ENCODE measurements at regions of chr4 and their contacts with region 1.

Region 1: DNA sequence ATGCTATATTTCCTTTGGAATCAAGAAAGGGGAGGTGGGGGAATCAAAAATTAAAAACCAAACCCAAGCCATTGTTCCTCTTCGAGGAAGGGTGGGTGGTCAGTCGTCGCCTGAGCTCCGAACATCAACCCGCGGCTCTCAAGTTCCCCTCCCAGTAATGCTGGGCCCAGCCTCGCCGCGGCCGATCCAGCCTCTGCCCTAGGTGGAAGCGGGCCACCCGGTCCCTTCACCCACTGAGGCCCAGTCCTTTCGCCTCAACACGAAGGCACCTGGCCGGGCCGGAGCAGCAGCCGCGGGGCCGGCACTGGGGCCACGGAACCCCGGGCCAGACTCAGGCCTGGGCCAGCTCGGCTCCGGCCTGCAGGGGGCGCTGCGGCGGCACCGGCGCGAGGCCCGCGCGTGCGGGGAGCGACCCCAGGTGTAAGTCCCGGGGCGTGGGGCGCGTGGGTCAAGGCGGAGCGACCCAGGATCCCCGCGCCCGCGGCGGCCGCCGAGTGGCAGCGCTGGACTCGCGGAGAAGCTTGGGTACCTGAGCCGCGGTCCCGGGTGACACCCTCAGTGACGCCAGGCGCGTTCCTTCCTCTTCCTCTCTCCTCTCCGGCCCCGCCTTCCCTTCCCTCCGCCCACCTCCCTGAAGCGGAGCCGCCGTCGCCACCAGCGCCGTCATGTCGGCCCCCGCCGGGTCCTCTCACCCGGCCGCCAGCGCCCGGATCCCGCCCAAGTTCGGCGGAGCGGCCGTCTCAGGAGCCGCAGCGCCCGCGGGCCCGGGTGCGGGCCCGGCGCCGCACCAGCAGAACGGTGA is at the start of gene SEC24B:
- DNase-seq: peak; percentile 78 to 96 (median 88)
- ATAC-seq: peak; percentile 87
- H3K4me3 ChIP-seq: peak within 1 kb of the TSS; percentile 96
- H3K4me3 Mint-ChIP-seq: peak within 1 kb of the TSS; percentile 96
- H3K27ac ChIP-seq: peak within 1 kb of the TSS; percentile 78 to 89
- H3K27ac Mint-ChIP-seq: peak within 1 kb of the TSS; percentile 95
- H3K4me1 ChIP-seq: peaks cover 39% of the 10 kb centered on the region
- H3K4me1 Mint-ChIP-seq: peaks cover 58% of the 10 kb centered on the region
- H3K27me3 ChIP-seq: no peaks in the 10 kb centered on the region
- H3K27me3 Mint-ChIP-seq: no peaks in the 10 kb centered on the region
- CTCF ChIP-seq: peak; percentile 87
- total RNA-seq, gene SEC24B: 41.5 to 45.9 TPM

Region 2: GRCh38 chr4:108620101-108620932 is 813.1 kb before region 1 on chr4 and contains the start of gene RPL34:
- CTCF ChIA-PET with region 1: no interaction called
- POLR2A ChIA-PET with region 1: no interaction called
- intact Hi-C with region 1: loop called in 1 of 2 experiments (anchors 5 kb)
- DNase-seq: peak; percentile 93 to 99 (median 97)
- ATAC-seq: peak; percentile 98
- H3K4me3 ChIP-seq: peak within 1 kb of the TSS; percentile 78
- H3K4me3 Mint-ChIP-seq: peak within 1 kb of the TSS; percentile 97
- H3K27ac ChIP-seq: peak within 1 kb of the TSS; percentile 85
- H3K27ac Mint-ChIP-seq: peak within 1 kb of the TSS; percentile 99
- H3K4me1 ChIP-seq: peaks cover 36% of the 10 kb centered on the region
- H3K4me1 Mint-ChIP-seq: peaks cover 65% of the 10 kb centered on the region
- H3K27me3 ChIP-seq: no peaks in the 10 kb centered on the region
- H3K27me3 Mint-ChIP-seq: no peaks in the 10 kb centered on the region
- CTCF ChIP-seq: no peak
- total RNA-seq, gene RPL34: 3,283 to 3,551 TPM

Region 3: GRCh38 chr4:109658871-109659410 is 225.5 kb after region 1 on chr4:
- CTCF ChIA-PET with region 1: interaction called, 3 read pairs
- POLR2A ChIA-PET with region 1: interaction called, 9 read pairs
- intact Hi-C with region 1: loop called (anchors 2 kb)
- DNase-seq: peak in 5 of 14 experiments; percentile 22 to 59 (median 45)
- ATAC-seq: peak; percentile 78
- H3K4me3 ChIP-seq: no peak overlapping the region
- H3K4me3 Mint-ChIP-seq: no peak overlapping the region
- H3K27ac ChIP-seq: no peak overlapping the region
- H3K27ac Mint-ChIP-seq: no peak overlapping the region
- H3K4me1 ChIP-seq: peaks cover 37% of the 10 kb centered on the region
- H3K4me1 Mint-ChIP-seq: peaks cover 64% of the 10 kb centered on the region
- H3K27me3 ChIP-seq: no peaks in the 10 kb centered on the region
- H3K27me3 Mint-ChIP-seq: no peaks in the 10 kb centered on the region
- CTCF ChIP-seq: peak; percentile 61

Region 4: DNA sequence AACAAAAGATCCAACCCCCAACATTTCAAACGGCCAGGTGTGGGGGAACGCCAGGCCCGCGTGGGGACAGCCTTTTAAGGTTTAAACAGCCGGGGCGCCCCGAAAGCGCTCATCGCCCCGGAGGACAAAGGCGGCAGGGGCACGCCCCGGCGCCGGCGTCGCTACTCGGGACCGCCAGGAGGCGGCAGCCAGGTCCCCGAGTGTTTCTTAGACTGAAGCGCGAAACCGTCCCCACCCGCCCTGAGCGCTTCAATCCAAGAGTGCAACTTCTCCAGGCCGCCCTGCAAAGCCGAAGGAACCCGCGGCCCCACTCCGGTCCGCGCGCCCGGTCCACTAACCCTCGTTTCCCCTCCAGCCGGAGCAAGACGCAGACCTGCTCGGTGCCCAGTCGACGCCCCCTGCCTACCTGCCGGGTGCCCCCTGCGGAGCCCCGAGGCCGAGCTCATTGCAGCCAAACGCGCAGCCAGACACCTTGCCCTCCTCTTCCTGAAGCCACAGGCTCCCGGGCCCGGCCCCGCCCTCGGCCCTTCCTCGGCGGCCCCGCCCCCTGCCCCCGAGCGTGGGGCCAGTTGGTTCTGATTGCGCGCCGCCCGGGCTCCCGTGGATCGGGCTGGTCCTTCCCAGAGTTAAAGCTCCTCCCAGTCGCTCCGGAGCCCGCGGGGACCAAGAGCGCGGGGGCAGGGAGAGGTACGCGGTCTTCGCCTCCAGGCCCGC is 269.7 kb after region 1 on chr4 and contains the start of gene CASP6:
- CTCF ChIA-PET with region 1: interaction called, 6 read pairs
- POLR2A ChIA-PET with region 1: interaction called, 4 read pairs
- intact Hi-C with region 1: loop called (anchors 2 to 5 kb)
- DNase-seq: peak; percentile 62 to 90 (median 73)
- ATAC-seq: peak; percentile 90
- H3K4me3 ChIP-seq: peak within 1 kb of the TSS; percentile 80
- H3K4me3 Mint-ChIP-seq: peak within 1 kb of the TSS; percentile 97
- H3K27ac ChIP-seq: peak within 1 kb of the TSS; percentile 39 to 60
- H3K27ac Mint-ChIP-seq: peak within 1 kb of the TSS; percentile 96
- H3K4me1 ChIP-seq: peaks cover 33% of the 10 kb centered on the region
- H3K4me1 Mint-ChIP-seq: peaks cover 50% of the 10 kb centered on the region
- H3K27me3 ChIP-seq: no peaks in the 10 kb centered on the region
- H3K27me3 Mint-ChIP-seq: no peaks in the 10 kb centered on the region
- CTCF ChIP-seq: peak; percentile 78
- total RNA-seq, gene CASP6: 5.4 to 5.5 TPM

Region 5: DNA sequence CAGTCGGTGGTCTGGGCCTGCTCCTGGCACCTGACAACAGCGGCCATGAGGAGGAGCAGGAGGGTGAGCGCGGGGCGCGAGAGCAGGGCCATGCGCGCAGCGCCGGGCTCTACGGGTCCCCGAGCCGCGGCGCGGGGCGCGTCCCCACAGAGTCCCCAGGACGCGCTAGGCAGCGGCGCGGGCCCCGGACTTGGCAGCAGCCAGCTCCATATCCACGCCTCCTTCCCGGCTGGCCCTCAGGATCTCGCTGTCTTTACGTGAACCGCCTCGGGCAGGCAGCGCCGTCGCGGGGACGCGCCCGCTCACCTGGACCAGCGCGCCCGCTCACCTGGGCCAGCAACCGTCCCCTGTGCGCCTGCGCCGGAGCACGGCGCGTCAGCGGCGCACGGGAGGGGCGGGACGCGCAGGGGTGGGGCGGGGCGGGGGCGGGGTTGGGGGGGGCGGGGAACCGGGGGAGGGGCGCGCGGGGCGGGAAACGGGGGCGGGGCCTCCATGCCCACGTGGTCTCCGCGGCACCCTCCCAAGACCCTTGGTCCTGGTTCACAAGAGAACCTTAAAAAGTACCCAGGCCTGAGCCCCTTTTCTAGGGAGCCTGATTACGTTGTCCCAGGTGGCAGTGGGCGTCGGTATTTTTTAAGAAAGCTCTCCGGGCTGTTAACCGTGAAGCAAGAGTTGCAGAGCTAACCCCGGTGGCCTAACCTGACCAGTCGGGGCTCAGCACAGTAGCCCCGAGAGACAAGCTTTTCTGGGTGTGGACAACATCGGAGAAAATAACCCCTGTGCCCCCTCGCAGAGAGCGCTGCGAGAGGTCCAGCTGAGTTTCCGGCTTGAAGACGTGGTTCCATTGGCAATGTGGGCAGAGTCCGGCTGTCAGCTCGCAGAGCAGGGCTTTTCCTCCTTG is 296.6 kb after region 1 on chr4 and contains the start of gene PLA2G12A:
- CTCF ChIA-PET with region 1: interaction called, 10 read pairs
- POLR2A ChIA-PET with region 1: interaction called, 9 read pairs
- intact Hi-C with region 1: loop called in 1 of 2 experiments (anchors 2 kb)
- DNase-seq: peak; percentile 66 to 93 (median 80)
- ATAC-seq: peak; percentile 89
- H3K4me3 ChIP-seq: peak within 1 kb of the TSS; percentile 93
- H3K4me3 Mint-ChIP-seq: peak within 1 kb of the TSS; percentile 92
- H3K27ac ChIP-seq: peak within 1 kb of the TSS; percentile 35 to 38
- H3K27ac Mint-ChIP-seq: peak within 1 kb of the TSS; percentile 89
- H3K4me1 ChIP-seq: peaks cover 16% of the 10 kb centered on the region
- H3K4me1 Mint-ChIP-seq: peaks cover 33% of the 10 kb centered on the region
- H3K27me3 ChIP-seq: no peaks in the 10 kb centered on the region
- H3K27me3 Mint-ChIP-seq: no peaks in the 10 kb centered on the region
- CTCF ChIP-seq: no peak
- total RNA-seq, gene PLA2G12A: 9.6 to 10.5 TPM

Region 6: DNA sequence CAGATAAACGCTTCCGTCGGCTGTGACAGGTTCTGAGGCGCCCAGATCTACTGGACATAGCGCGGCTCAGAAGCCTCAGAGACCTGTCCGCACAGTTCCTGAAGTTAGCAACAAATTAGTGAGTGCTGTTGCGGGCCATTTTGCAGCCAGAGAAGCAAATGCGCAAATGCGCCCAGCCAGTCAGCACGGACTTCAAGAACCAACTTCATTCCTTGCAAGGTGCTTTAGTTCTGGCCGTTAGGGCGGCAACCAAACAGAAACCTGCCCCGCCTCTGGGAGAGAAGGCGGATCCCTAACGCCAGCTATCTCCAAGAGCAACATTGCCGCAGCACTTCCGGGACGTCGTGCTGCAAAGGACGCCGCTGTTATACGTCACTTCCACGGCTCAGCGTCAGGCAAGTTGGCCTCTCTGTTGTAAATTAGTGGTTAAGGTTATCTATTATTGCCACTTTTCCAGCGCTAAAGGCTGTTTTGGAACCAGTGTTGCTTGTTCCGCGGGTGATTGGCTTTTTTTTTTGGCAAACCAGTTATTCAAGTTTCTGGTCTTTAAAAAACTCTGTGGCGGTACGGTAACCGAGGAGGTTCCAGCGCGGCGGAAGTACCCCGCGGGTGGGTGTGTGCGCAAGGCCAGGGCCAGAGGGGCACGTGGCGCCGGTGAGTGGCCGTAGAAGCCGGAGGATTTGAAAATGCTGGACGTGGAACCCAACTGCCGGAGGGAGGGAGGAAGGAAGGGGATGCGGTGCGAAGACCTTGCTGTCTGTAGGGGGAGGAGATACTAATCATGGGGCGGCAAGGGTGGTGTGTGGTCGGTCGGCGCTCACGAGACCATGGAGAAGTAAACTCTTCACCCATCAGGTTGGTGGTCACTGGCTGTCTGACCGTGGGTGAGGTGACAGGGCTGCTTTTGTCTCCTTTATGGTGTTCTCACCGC is 382.0 kb after region 1 on chr4 and contains the start of gene GAR1:
- CTCF ChIA-PET with region 1: interaction called, 9 read pairs
- POLR2A ChIA-PET with region 1: interaction called, 11 read pairs
- intact Hi-C with region 1: loop called in 1 of 2 experiments (anchors 2 kb)
- DNase-seq: peak; percentile 68 to 96 (median 82)
- ATAC-seq: peak; percentile 91
- H3K4me3 ChIP-seq: peak within 1 kb of the TSS; percentile 67
- H3K4me3 Mint-ChIP-seq: peak within 1 kb of the TSS; percentile 96
- H3K27ac ChIP-seq: peak within 1 kb of the TSS; percentile 90 to 96
- H3K27ac Mint-ChIP-seq: peak within 1 kb of the TSS; percentile 98
- H3K4me1 ChIP-seq: peaks cover 18% of the 10 kb centered on the region
- H3K4me1 Mint-ChIP-seq: peaks cover 42% of the 10 kb centered on the region
- H3K27me3 ChIP-seq: no peaks in the 10 kb centered on the region
- H3K27me3 Mint-ChIP-seq: no peaks in the 10 kb centered on the region
- CTCF ChIP-seq: no peak
- total RNA-seq, gene GAR1: 8.4 to 9.6 TPM

Region 7: DNA sequence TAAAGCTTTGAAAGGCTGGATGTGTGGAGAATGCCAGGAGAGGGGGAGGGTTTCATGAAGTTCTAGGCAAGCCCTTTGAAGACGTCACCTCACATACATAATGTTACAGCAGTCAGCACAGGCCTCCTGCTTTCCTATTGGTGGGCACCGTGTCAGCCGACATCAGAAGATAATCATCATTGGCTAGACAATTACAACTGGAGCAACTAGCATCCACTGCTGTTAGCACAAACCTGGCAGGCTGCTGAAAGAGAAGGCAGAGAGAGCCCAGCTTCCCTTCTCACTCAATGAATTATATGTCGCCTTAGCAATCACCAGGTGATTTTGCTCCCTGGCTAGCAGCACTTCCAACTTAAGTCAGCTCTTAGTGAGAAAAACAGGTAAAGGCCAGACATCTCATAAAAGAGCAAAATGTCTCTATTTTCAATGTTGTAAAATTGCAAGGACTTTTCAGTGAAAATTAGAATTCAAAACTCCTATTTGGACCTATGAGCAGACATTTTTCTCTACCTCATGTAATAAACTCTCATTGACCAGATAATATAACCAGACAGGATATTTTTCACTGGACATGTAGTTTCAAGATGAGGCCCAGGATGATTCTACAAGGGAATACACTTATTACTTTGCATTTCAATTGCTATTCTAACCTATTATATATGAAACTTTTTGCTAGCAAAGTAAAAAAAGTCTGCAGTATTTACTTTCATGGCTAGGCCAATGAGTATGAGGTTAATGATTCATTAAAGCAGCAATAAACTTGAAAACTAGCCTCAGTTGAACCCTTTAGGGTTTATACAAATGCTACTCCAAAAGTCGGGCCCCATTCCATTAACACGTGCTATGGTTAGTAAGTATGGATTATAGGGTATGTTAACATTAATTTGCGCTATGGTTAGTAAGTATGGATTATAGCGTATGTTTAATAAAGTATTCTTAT is 760.7 kb after region 1 on chr4:
- CTCF ChIA-PET with region 1: no interaction called
- POLR2A ChIA-PET with region 1: no interaction called
- intact Hi-C with region 1: loop called in 1 of 2 experiments (anchors 5 kb)
- DNase-seq: peak; percentile 53 to 92 (median 68)
- ATAC-seq: peak; percentile 90
- H3K4me3 ChIP-seq: no peak overlapping the region
- H3K4me3 Mint-ChIP-seq: peak overlapping the region; percentile 58
- H3K27ac ChIP-seq: peak overlapping the region; percentile 25 to 35
- H3K27ac Mint-ChIP-seq: peak overlapping the region; percentile 87
- H3K4me1 ChIP-seq: peaks cover 21% of the 10 kb centered on the region
- H3K4me1 Mint-ChIP-seq: peaks cover 41% of the 10 kb centered on the region
- H3K27me3 ChIP-seq: no peaks in the 10 kb centered on the region
- H3K27me3 Mint-ChIP-seq: no peaks in the 10 kb centered on the region
- CTCF ChIP-seq: no peak

Measured in CD4-positive, alpha-beta T cell (primary cell).